ENCODE measurements at regions of chr7 and their contacts with region 1.

Region 1: DNA sequence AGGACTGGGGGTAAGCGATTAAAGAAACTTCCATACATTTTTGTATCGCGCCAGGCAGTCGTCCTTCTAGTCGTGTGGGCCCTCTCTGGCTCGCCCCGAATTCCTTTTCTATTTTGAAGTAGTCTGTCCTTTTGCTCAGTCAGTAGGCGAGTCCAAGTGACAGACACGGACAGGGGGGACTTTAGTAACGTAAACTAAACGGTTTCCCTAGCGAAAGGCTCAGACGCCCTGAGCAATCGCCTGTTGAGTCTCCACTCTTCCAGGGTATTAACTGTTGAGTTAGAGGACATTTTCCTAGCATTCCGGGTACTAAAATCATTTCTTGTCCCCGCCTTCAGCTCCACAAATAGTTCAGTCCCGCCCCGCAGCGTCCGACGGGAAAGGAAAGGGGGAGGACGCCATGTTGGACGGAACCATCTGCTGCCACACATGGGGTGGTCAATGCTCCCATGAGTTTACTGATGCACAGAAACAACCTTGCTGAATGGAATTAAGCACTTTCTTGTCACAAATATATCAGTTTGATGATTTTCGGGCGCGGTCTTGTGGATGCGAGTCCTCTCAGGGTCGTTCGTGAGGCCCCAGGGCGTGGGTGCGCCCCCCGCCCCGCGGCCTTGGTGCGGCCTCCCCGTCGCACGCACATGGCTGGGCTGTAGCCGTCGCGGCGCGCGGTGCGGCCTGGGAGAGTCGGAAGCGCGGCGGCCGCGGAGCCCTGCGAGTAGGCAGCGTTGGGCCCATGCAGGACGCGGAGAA is at the start of gene EIF3B:
- DNase-seq: peak; percentile 89
- ATAC-seq: peak; percentile 91
- H3K4me3 ChIP-seq: peak within 1 kb of the TSS; percentile 93
- H3K27ac ChIP-seq: peak within 1 kb of the TSS; percentile 99
- H3K4me1 ChIP-seq: peaks cover 12% of the 10 kb centered on the region
- H3K27me3 ChIP-seq: no peaks in the 10 kb centered on the region
- CTCF ChIP-seq: no peak
- EP300 ChIP-seq: no peak
- POLR2A ChIP-seq: peak; percentile 97
- RAD21 ChIP-seq: no peak
- polyA plus RNA-seq, gene EIF3B: 17.6 to 52.4 TPM

Region 2: GRCh38 chr7:1569833-1570633 is 784.3 kb before region 1 on chr7 and contains the start of gene PSMG3:
- CTCF ChIA-PET with region 1: no interaction called
- POLR2A ChIA-PET with region 1: no interaction called
- RAD21 ChIA-PET with region 1: no interaction called
- SMC1A ChIA-PET with region 1: no interaction called
- in situ Hi-C with region 1: loop called (anchors 5 kb)
- intact Hi-C with region 1: no loop called
- DNase-seq: peak; percentile 32
- ATAC-seq: peak; percentile 94
- H3K4me3 ChIP-seq: peak within 1 kb of the TSS; percentile 97
- H3K27ac ChIP-seq: peak within 1 kb of the TSS; percentile 91
- H3K4me1 ChIP-seq: no peaks in the 10 kb centered on the region; the same call in 1 of the 2 replicates
- H3K27me3 ChIP-seq: no peaks in the 10 kb centered on the region
- CTCF ChIP-seq: peak; percentile 11 to 35 (median 27); a peak in 4 of 6 replicates
- EP300 ChIP-seq: no peak
- POLR2A ChIP-seq: peak; percentile 80
- RAD21 ChIP-seq: no peak
- polyA plus RNA-seq, gene PSMG3: 23.9 to 40.5 TPM

Region 3: GRCh38 chr7:1853986-1854865 is 500.1 kb before region 1 on chr7:
- CTCF ChIA-PET with region 1: no interaction called
- POLR2A ChIA-PET with region 1: no interaction called
- RAD21 ChIA-PET with region 1: no interaction called
- SMC1A ChIA-PET with region 1: no interaction called
- in situ Hi-C with region 1: no loop called
- intact Hi-C with region 1: no loop called
- DNase-seq: no peak
- ATAC-seq: no peak
- H3K4me3 ChIP-seq: no peak overlapping the region
- H3K27ac ChIP-seq: no peak overlapping the region
- H3K4me1 ChIP-seq: no peaks in the 10 kb centered on the region
- H3K27me3 ChIP-seq: no peaks in the 10 kb centered on the region
- CTCF ChIP-seq: no peak
- EP300 ChIP-seq: no peak
- POLR2A ChIP-seq: no peak
- RAD21 ChIP-seq: no peak

Region 4: DNA sequence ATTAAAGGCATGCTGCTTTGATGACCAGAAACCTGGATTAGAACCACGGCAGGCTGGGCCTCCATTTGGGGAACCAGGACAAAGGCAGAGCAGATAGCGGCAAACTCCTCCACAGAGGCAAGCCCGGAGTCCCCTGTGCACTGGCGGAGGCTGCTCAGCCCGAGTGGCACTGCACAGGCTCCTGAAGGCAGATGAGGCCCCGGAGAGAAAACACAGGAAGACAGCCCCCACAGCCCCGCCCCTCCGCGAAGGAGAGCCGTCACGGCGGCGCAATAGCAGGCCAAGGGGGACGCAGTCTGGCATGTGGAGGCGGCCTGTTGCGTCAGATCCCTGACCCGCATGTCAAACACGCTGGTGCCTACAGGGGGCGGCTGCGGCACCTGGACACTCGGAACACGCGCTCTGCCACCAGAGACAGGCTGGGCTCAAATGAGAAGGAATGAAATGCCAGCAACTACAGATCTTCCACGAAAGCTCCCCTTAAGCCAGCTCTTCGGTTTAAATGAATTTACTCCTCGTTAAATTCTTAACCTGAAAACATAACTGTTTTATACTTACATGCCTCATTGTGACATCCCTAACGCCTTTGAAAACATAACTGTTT is 250.2 kb before region 1 on chr7:
- CTCF ChIA-PET with region 1: no interaction called
- POLR2A ChIA-PET with region 1: no interaction called
- RAD21 ChIA-PET with region 1: interaction called, 3 read pairs
- SMC1A ChIA-PET with region 1: no interaction called
- in situ Hi-C with region 1: no loop called
- intact Hi-C with region 1: loop called (anchors 2 kb)
- DNase-seq: no peak
- ATAC-seq: peak; percentile 48
- H3K4me3 ChIP-seq: no peak overlapping the region
- H3K27ac ChIP-seq: no peak overlapping the region
- H3K4me1 ChIP-seq: peaks cover 15% of the 10 kb centered on the region
- H3K27me3 ChIP-seq: no peaks in the 10 kb centered on the region
- CTCF ChIP-seq: peak; percentile 15 to 47 (median 37); a peak in 4 of 6 replicates
- EP300 ChIP-seq: no peak
- POLR2A ChIP-seq: no peak
- RAD21 ChIP-seq: no peak

Region 5: GRCh38 chr7:2241580-2242540 is 112.5 kb before region 1 on chr7 and contains the starts of genes MRM2 and NUDT1:
- CTCF ChIA-PET with region 1: interaction called, 23 read pairs
- POLR2A ChIA-PET with region 1: interaction called, 8 read pairs
- RAD21 ChIA-PET with region 1: interaction called, 3 read pairs
- SMC1A ChIA-PET with region 1: interaction called, 4 read pairs
- in situ Hi-C with region 1: loop called (anchors 5 kb)
- intact Hi-C with region 1: loop called (anchors 2 kb)
- DNase-seq: no peak
- ATAC-seq: peak; percentile 80
- H3K4me3 ChIP-seq: peak within 1 kb of the TSS; percentile 83
- H3K27ac ChIP-seq: peak within 1 kb of the TSS; percentile 84
- H3K4me1 ChIP-seq: peaks cover 53% of the 10 kb centered on the region
- H3K27me3 ChIP-seq: no peaks in the 10 kb centered on the region
- CTCF ChIP-seq: no peak
- EP300 ChIP-seq: no peak
- POLR2A ChIP-seq: peak; percentile 99
- RAD21 ChIP-seq: no peak
- polyA plus RNA-seq, gene MRM2: 91.4 to 92.9 TPM
- polyA plus RNA-seq, gene NUDT1: 7.7 to 23.3 TPM

Region 6: GRCh38 chr7:2248984-2249694 is 105.2 kb before region 1 on chr7:
- CTCF ChIA-PET with region 1: interaction called, 3 read pairs
- POLR2A ChIA-PET with region 1: no interaction called
- RAD21 ChIA-PET with region 1: interaction called, 20 read pairs
- SMC1A ChIA-PET with region 1: interaction called, 3 read pairs
- in situ Hi-C with region 1: loop called (anchors 5 kb)
- intact Hi-C with region 1: loop called (anchors 2 kb)
- DNase-seq: peak; percentile 48
- ATAC-seq: peak; percentile 67
- H3K4me3 ChIP-seq: peak overlapping the region; percentile 50; the same call in 1 of the 2 replicates
- H3K27ac ChIP-seq: peak overlapping the region; percentile 67
- H3K4me1 ChIP-seq: peaks cover 33% of the 10 kb centered on the region
- H3K27me3 ChIP-seq: no peaks in the 10 kb centered on the region
- CTCF ChIP-seq: peak in 2 of 3 experiments; percentile 12 to 54; a peak in 2 of 6 replicates
- EP300 ChIP-seq: 0 out of 4 replicates have a peak, but pooled peaks of 1 of the 2 experiments have one; percentile 13
- POLR2A ChIP-seq: peak; percentile 44; the same call in 1 of the 2 replicates
- RAD21 ChIP-seq: 0 out of 2 replicates have a peak, but pooled peaks have one; percentile 24

Region 7: DNA sequence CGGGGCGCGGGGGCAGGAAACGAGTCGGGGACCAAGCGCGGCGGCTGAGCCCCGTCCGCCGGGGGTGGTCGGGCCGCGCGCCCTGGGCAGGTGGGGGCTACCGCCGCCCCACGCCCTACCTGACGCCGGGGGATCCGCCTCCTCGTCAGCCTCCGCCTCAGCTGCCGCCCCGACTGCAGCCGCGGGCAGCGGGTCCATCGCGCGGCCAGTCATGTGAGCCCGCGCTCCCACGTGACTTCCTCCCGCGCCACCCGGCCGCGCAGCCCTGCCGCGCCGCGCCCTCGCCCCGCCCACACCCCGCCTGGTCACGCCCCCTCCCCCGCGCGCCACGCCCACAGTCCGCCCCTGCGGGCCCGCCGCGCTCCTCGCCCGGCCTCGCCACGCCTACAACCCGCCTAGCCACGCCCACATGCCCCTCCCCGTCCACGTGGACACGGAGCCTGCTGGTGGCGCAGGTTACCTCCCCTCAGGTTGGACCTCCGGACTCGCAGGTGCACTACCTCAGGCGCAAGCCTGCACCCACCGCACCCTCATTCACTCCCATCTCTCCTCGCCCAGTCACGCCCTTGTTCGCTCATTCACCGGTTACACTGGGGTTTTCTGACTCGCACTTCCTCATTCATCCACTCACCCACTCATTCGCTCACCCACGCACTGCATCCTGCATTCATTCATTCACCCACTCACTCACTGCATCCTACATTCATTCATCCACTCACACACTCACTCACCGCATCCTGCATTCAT is 40.0 kb before region 1 on chr7 and contains the start of gene SNX8:
- CTCF ChIA-PET with region 1: no interaction called
- POLR2A ChIA-PET with region 1: interaction called, 3 read pairs
- RAD21 ChIA-PET with region 1: no interaction called
- SMC1A ChIA-PET with region 1: no interaction called
- in situ Hi-C with region 1: no loop called
- intact Hi-C with region 1: loop called (anchors 2 kb)
- DNase-seq: no peak
- ATAC-seq: peak; percentile 77
- H3K4me3 ChIP-seq: peak within 1 kb of the TSS; percentile 99
- H3K27ac ChIP-seq: peak within 1 kb of the TSS; percentile 92
- H3K4me1 ChIP-seq: peaks cover 17% of the 10 kb centered on the region
- H3K27me3 ChIP-seq: no peaks in the 10 kb centered on the region
- CTCF ChIP-seq: no peak
- EP300 ChIP-seq: 0 out of 4 replicates have a peak, but pooled peaks of 1 of the 2 experiments have one; percentile 15
- POLR2A ChIP-seq: peak; percentile 88
- RAD21 ChIP-seq: no peak
- polyA plus RNA-seq, gene SNX8: 6.4 to 21.5 TPM

Region 8: DNA sequence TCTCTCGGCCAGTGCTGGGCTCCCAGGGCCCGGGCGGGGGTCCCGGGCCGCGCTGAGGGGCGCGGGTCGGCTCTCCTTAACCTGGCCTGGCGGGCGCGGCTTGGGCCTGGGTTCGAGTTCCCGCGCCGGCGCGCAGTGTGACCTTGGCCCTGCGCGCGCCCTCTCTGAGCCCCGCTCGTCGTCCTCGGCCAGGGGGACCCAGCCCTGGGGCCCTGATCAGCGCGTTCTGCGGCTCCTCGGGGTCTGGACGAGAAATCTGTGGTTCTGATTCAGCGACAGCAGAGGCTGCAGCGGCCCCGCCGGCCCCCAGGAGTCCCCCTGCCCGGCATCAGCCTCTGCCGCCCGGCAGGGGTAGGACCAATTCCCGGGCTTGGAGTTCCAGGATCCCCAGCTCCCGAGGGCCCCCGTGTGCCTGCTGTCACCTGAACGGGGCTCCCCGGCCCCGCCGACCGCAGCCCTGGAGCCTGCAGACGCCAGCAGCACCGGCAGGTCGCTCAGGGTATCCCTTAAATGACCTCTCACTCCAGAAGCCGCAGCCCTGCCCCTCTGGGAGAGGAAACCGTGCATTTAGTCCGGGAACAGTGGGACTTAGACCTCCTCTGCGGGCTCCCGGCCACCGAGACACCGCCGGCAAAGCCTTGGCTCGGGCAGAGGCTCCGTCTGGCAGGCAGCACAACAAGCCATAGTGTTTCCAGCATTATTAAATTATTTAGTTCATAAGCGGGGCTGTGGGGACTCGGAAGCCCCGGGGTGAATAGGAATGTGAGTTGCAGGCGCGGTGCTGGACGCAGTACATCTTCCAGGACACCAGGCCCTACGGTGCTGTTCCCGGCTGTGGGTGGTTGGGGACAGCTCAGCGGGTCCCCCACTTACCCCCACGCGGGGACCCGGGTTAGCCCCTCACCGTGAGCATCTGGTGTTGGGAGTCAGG is 49.6 kb after region 1 on chr7:
- CTCF ChIA-PET with region 1: interaction called, 4 read pairs
- POLR2A ChIA-PET with region 1: interaction called, 6 read pairs
- RAD21 ChIA-PET with region 1: interaction called, 28 read pairs
- SMC1A ChIA-PET with region 1: interaction called, 10 read pairs
- in situ Hi-C with region 1: no loop called
- intact Hi-C with region 1: loop called (anchors 2 kb)
- DNase-seq: no peak
- ATAC-seq: peak; percentile 7
- H3K4me3 ChIP-seq: peak overlapping the region; percentile 70
- H3K27ac ChIP-seq: peak overlapping the region; percentile 84
- H3K4me1 ChIP-seq: peaks cover 42% of the 10 kb centered on the region
- H3K27me3 ChIP-seq: no peaks in the 10 kb centered on the region
- CTCF ChIP-seq: 0 out of 6 replicates have a peak, but pooled peaks of 1 of the 3 experiments have one; percentile 8
- EP300 ChIP-seq: no peak
- POLR2A ChIP-seq: no peak; the same call in 1 of the 2 replicates
- RAD21 ChIP-seq: no peak

Region 9: DNA sequence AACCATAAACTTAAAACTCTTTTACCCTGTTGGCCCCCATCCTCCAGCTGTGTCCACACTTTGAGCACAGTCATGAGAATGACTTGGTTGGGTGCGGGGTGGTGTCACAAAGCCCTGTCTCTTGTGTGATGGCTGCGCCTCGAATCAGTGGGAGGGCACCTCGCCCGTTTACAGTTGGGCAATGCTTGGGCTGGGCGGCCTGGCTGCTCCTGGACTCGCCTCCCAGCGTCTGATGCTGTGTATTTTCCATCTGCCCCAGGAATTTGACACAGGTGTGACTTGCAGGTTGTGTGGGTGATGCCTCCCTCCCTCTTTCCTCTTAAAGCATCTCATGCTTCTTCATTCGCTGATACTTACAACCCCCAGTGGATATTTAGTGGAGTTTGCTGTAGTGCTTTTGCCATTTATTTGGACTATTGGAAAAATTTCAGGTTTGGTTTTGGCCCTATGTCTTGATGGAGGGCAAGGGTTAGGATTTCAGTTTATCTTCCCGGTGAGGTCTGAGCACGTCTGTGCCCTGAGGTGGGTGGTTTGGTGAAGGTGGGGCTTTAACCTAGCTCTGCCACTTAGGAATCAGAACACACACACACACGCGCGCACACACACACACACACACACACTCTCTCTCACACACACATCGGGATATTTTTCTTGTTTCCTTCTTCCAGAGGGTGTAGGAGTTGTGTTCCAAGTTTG is 82.9 kb after region 1 on chr7:
- CTCF ChIA-PET with region 1: no interaction called
- POLR2A ChIA-PET with region 1: no interaction called
- RAD21 ChIA-PET with region 1: no interaction called
- SMC1A ChIA-PET with region 1: no interaction called
- in situ Hi-C with region 1: no loop called
- intact Hi-C with region 1: no loop called
- DNase-seq: no peak
- ATAC-seq: no peak
- H3K4me3 ChIP-seq: no peak overlapping the region
- H3K27ac ChIP-seq: no peak overlapping the region
- H3K4me1 ChIP-seq: no peaks in the 10 kb centered on the region
- H3K27me3 ChIP-seq: no peaks in the 10 kb centered on the region
- CTCF ChIP-seq: no peak
- EP300 ChIP-seq: no peak
- POLR2A ChIP-seq: no peak
- RAD21 ChIP-seq: no peak

Measured in GM12878 (cell line).